ENCODE measurements at regions of chr2 and their contacts with region 1.

Region 1: DNA sequence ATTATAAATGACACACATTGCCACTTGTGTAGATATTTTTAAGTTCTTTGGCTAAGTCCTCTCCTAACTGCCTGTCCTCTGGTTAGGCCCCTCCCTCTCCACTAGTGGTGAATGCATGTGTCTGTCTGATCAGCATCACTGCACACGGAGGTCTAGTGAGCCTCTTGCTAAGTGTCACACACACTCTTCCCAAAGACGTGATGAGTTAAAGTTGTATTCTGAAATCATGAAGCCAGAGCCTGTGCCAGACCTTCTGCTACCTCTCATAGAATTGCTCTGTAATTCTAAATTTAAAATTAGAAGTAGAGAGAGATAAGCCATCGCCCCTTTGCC is 41.3 kb downstream of the RALB start:
- DNase-seq: no peak
- H3K4me3 ChIP-seq: no peak overlapping the region
- H3K27ac ChIP-seq: no peak overlapping the region
- H3K4me1 ChIP-seq: peaks cover 39% of the 10 kb centered on the region
- H3K27me3 ChIP-seq: no peaks in the 10 kb centered on the region
- CTCF ChIP-seq: no peak

Region 2: DNA sequence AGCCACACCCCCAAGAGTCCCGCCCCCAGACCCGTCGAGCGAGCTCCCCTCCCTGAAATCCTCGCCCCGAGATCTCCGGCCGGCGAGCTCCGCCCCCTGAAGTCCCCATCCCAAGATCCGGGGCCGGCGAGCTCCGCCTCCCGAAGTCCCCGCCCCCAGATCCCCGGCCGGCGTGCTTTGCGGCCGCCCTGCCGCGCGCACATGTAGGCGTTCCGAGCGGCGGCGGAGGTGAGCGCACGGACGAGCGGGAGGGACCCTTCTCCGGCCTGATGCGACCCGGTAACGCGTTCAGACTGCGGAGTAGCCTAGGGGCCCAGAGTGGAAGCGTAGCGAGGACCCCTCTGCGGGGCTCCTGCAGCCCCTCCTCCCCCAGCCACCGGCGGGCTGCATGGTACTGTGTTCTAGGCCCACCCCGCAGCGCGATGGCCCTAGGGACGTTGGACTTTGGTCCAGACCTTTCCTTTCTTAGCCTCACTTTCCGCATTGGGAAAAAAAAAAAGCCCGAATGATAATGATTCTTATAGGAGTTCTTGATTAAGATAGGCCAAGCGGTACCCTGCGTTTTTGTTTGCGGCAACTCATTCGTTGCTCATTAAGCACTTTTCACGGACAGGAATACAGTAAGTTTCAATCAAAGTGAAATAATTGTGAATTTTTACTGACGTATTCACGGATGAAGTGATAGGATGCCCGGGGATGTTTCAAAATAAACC is 614.8 kb before region 1 on chr2 and contains the start of gene TMEM177:
- CTCF ChIA-PET with region 1: no interaction called
- POLR2A ChIA-PET with region 1: no interaction called
- intact Hi-C with region 1: loop called (anchors 2 kb)
- DNase-seq: peak; percentile 81 to 92
- H3K4me3 ChIP-seq: peak within 1 kb of the TSS; percentile 87
- H3K27ac ChIP-seq: no peak within 1 kb of the TSS
- H3K4me1 ChIP-seq: peaks cover 10% of the 10 kb centered on the region
- H3K27me3 ChIP-seq: no peaks in the 10 kb centered on the region
- CTCF ChIP-seq: no peak
- total RNA-seq, gene TMEM177: 18.2 and 18.4 TPM in 2 replicates

Region 3: DNA sequence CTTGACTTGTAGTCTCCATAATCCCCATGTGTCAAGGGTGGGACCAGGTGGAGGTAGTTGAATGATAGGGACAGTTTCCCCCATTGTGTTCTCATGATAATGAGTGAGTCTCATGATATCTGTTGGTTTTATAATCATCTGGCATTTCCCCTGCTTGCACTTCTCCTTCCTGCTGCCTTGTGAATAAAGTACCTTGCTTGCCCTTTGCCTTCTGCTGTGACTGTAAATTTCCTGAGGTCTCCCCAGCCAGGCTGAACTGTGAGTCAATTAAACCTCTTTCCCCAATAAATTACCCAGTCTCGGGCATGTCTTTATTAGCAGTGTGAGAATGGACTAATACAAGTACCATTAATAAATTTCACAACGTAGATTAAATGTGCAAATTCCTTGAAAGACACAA is 383.4 kb before region 1 on chr2:
- CTCF ChIA-PET with region 1: no interaction called
- POLR2A ChIA-PET with region 1: no interaction called
- intact Hi-C with region 1: no loop called
- DNase-seq: no peak
- H3K4me3 ChIP-seq: no peak overlapping the region
- H3K27ac ChIP-seq: no peak overlapping the region
- H3K4me1 ChIP-seq: no peaks in the 10 kb centered on the region
- H3K27me3 ChIP-seq: no peaks in the 10 kb centered on the region
- CTCF ChIP-seq: no peak

Region 4: GRCh38 chr2:120223034-120223912 is 70.7 kb before region 1 on chr2 and contains the start of gene TMEM185B:
- CTCF ChIA-PET with region 1: no interaction called
- POLR2A ChIA-PET with region 1: no interaction called
- intact Hi-C with region 1: loop called (anchors 1 kb)
- DNase-seq: peak; percentile 76 to 97
- H3K4me3 ChIP-seq: peak within 1 kb of the TSS; percentile 72
- H3K27ac ChIP-seq: peak within 1 kb of the TSS; percentile 73
- H3K4me1 ChIP-seq: peaks cover 49% of the 10 kb centered on the region
- H3K27me3 ChIP-seq: no peaks in the 10 kb centered on the region
- CTCF ChIP-seq: peak; percentile 59; the same call in 1 of the 2 replicates
- total RNA-seq, gene TMEM185B: 23.5 and 30.3 TPM in 2 replicates

Region 5: DNA sequence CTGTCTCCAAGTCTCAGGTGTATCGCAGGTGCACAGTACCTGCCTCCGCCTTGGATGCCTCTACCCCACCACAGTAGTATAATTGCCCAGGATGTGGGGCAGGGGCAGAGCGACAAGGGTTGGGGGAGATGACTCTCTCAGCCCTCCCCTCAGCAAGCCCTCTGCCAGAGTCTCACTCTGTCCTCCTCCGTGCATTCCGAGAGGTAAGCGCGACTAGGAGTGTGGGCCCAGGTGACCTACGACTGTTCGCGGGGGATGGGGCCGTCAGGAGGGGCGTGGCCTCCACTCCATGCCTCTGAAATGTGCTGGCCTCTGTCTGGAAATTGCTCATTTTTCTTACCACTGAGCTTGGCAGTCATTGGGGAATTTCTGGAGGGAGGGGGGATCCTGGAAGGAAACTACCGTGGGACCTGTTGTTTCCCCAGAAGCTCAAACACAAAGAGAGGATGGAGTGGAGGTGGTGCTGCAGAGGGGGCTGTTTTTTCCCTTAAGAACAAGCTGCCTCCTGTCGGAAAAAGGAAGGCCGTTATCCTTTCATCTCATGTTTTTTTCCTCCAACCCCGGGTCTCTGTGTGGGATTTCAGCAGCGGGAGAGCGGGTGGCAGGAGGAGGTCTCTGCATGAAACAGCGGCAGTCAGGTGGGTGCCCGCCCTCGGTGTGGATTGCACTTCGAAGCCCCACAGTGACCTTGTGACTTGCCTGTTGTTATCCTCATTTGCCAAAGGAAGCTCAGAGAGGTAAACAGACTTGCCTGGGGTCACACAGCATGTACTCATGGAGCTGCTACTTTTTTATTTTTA is 54.3 kb before region 1 on chr2:
- CTCF ChIA-PET with region 1: interaction called, 3 read pairs
- POLR2A ChIA-PET with region 1: no interaction called
- intact Hi-C with region 1: loop called (anchors 1 kb)
- DNase-seq: peak; percentile 90 to 92
- H3K4me3 ChIP-seq: peak overlapping the region; percentile 41; the same call in 1 of the 2 replicates
- H3K27ac ChIP-seq: peak overlapping the region; percentile 95
- H3K4me1 ChIP-seq: peaks cover 87% of the 10 kb centered on the region
- H3K27me3 ChIP-seq: no peaks in the 10 kb centered on the region
- CTCF ChIP-seq: no peak

Region 6: GRCh38 chr2:120245354-120245791 is 48.6 kb before region 1 on chr2:
- CTCF ChIA-PET with region 1: interaction called, 3 read pairs
- POLR2A ChIA-PET with region 1: no interaction called
- intact Hi-C with region 1: loop called (anchors 1 kb)
- DNase-seq: peak; percentile 90 to 98
- H3K4me3 ChIP-seq: peak overlapping the region; percentile 9; the same call in 1 of the 2 replicates
- H3K27ac ChIP-seq: peak overlapping the region; percentile 67
- H3K4me1 ChIP-seq: peaks cover 73% of the 10 kb centered on the region
- H3K27me3 ChIP-seq: no peaks in the 10 kb centered on the region
- CTCF ChIP-seq: no peak

Region 7: DNA sequence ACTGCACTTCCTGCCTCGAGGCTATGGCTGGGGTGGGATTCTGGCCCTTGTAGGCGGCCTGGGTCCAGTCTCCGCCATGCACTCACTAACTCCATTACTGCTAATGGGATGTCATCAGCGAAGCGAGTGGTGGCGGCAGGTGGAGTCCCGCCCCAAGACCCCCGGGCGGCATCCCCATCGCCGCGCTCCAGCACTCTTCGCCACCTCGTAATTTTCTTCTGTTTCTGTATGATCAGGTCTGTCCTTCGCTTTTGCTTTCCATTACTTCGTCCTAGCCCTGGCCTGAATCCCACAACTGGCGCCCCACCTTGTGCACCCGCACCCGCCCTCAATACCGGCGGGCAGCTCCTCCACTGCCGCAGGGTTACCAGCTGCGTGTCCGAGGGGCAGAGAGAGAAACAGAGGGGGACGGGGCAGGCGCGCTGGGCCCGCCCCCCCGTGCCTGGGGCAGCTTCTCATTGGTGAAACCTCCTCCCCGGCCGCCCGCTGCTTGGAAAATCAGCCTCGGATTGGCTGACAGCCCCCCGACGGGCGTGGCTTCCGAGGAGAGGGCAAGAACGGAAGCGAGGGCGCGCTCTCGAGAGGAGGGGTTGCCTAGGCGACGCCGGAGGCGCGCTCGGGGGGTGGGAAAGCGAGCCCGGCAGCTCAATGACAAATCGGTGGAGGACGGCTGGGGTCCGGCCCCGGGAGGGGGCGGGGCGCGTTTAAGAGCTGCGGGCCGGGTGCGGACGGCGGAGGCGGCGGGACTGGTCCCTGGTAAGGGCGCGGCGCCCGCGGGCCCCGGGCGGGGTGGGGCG is 41.6 kb before region 1 on chr2 and contains the start of gene RALB:
- CTCF ChIA-PET with region 1: interaction called, 4 read pairs
- POLR2A ChIA-PET with region 1: interaction called, 7 read pairs
- intact Hi-C with region 1: loop called (anchors 1 kb)
- DNase-seq: peak; percentile 98 to 100
- H3K4me3 ChIP-seq: peak within 1 kb of the TSS; percentile 80
- H3K27ac ChIP-seq: peak within 1 kb of the TSS; percentile 53
- H3K4me1 ChIP-seq: peaks cover 42% of the 10 kb centered on the region
- H3K27me3 ChIP-seq: no peaks in the 10 kb centered on the region
- CTCF ChIP-seq: no peak
- total RNA-seq, gene RALB: 74.2 and 86.6 TPM in 2 replicates

Region 8: GRCh38 chr2:120305296-120305695 is 11.3 kb after region 1 on chr2:
- CTCF ChIA-PET with region 1: no interaction called
- POLR2A ChIA-PET with region 1: no interaction called
- intact Hi-C with region 1: loop called (anchors 2 kb)
- DNase-seq: no peak
- H3K4me3 ChIP-seq: no peak overlapping the region
- H3K27ac ChIP-seq: no peak overlapping the region
- H3K4me1 ChIP-seq: no peaks in the 10 kb centered on the region
- H3K27me3 ChIP-seq: no peaks in the 10 kb centered on the region
- CTCF ChIP-seq: no peak; the same call in 1 of the 2 replicates

Region 9: DNA sequence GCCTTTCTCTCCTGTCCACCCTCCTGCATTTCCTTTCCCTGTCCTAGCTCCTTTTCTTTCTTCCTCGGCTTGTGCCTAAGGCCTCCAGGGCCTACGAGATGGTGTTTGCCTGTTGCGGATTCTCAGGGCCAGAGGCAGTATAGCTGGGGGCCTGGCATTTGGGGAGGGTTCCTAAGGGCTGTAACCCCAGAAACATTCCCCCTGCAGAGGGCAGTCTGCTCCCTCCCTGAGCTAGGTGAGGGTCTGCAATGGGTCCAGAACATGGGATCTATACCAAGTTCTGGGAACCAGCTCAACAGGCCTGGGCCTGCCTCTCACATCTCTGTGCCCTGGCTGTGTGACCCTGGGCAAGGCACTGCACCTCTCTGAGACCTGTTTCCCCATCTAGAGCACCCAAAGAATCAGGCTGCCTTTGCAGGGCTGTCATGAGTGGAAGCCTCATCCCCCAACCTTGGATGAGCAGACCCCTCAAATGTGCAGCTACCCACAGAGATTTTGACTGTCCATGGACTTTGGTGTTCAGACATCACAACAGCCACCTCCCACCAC is 539.2 kb after region 1 on chr2:
- CTCF ChIA-PET with region 1: no interaction called
- POLR2A ChIA-PET with region 1: no interaction called
- intact Hi-C with region 1: no loop called
- DNase-seq: no peak
- H3K4me3 ChIP-seq: no peak overlapping the region
- H3K27ac ChIP-seq: no peak overlapping the region
- H3K4me1 ChIP-seq: no peaks in the 10 kb centered on the region
- H3K27me3 ChIP-seq: 0 out of 2 replicates have a peak, but pooled peaks cover 5% of the 10 kb centered on the region
- CTCF ChIP-seq: no peak